Activated CD8-positive, alpha-beta T cell treated with anti-CD3 and anti-CD28 coated beads for 36 hours (primary cell): ENCODE measurements at regions of chr4 and their contacts with region 1.

Region 1: DNA sequence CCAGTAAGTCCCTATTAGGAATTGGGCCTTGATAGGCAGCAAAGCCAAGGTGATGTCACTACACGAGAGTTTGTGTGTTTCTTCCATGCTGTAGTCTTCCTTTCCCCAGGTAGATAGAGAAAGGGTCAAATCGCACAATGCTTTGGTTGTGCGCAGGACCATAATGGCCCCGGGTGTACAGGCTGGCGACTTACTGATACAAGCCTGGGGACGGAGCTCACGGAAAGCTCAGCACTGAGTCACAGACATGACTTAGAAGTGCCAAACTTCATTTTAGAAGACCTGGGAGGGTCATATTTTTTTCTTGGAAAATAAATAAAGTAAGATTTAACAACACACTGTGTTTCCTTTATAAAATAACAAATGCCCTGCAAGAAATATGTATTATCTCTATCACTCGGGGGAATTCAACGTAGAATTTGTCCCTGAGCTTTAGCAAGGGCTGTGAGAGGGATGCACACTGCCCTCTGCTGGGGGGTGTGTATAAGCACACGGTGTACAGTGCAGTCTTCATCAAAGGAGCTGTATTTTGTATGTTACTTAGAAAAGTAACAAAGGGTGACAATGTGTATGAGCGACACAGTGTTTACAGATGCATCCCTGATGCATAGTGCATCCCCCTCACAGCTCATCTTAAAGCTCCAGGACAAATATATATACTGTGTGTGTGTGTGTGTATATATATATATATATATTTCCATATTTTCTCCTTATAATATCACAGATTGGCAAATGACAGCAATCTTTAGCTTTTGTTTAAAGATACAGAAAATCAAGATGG is 254.5 kb upstream of the VEGFC start:
- DNase-seq: peak; percentile 51
- ATAC-seq: peak; percentile 96
- H3K4me3 Mint-ChIP-seq: no peak overlapping the region
- H3K27ac Mint-ChIP-seq: no peak overlapping the region
- H3K4me1 Mint-ChIP-seq: no peaks in the 10 kb centered on the region
- H3K27me3 Mint-ChIP-seq: peaks cover 6% of the 10 kb centered on the region
- CTCF ChIP-seq: peak; percentile 78

Region 2: GRCh38 chr4:176377780-176378179 is 669.5 kb before region 1 on chr4:
- CTCF ChIA-PET with region 1: interaction called, 33 read pairs
- POLR2A ChIA-PET with region 1: no interaction called
- intact Hi-C with region 1: loop called (anchors 5 kb)
- DNase-seq: no peak
- ATAC-seq: peak; percentile 47
- H3K4me3 Mint-ChIP-seq: no peak overlapping the region
- H3K27ac Mint-ChIP-seq: no peak overlapping the region
- H3K4me1 Mint-ChIP-seq: no peaks in the 10 kb centered on the region
- H3K27me3 Mint-ChIP-seq: peaks cover 8% of the 10 kb centered on the region
- CTCF ChIP-seq: peak; percentile 35

Region 3: DNA sequence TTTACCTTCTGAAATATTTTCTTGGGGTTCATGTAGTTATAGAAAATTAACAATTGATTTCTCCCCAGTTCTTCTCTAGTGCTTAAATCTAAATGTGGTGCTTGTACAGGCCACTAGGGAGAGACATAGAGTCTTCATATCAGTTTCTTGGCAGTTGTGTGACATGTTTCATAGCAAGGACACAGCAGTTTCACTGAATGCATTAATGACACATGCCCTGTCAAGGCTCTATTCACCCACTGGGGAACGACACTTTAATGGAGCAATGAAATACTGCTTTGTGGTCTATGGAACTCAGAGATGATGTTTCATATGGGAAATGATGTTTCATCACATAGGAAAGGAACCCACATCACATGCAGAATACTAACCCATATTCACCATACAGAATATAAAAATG is 257.3 kb before region 1 on chr4:
- CTCF ChIA-PET with region 1: no interaction called
- POLR2A ChIA-PET with region 1: no interaction called
- intact Hi-C with region 1: loop called (anchors 5 kb)
- DNase-seq: no peak
- ATAC-seq: peak; percentile 65
- H3K4me3 Mint-ChIP-seq: no peak overlapping the region
- H3K27ac Mint-ChIP-seq: no peak overlapping the region
- H3K4me1 Mint-ChIP-seq: peaks cover 6% of the 10 kb centered on the region
- H3K27me3 Mint-ChIP-seq: peaks cover 41% of the 10 kb centered on the region
- CTCF ChIP-seq: peak; percentile 52

Region 4: GRCh38 chr4:176883681-176884418 is 163.4 kb before region 1 on chr4:
- CTCF ChIA-PET with region 1: no interaction called
- POLR2A ChIA-PET with region 1: no interaction called
- intact Hi-C with region 1: no loop called
- DNase-seq: no peak
- ATAC-seq: no peak
- H3K4me3 Mint-ChIP-seq: no peak overlapping the region
- H3K27ac Mint-ChIP-seq: no peak overlapping the region
- H3K4me1 Mint-ChIP-seq: no peaks in the 10 kb centered on the region
- H3K27me3 Mint-ChIP-seq: no peaks in the 10 kb centered on the region
- CTCF ChIP-seq: no peak

Region 5: GRCh38 chr4:177033135-177033534 is 14.1 kb before region 1 on chr4:
- CTCF ChIA-PET with region 1: interaction called, 10 read pairs
- POLR2A ChIA-PET with region 1: no interaction called
- intact Hi-C with region 1: no loop called
- DNase-seq: no peak
- ATAC-seq: no peak
- H3K4me3 Mint-ChIP-seq: no peak overlapping the region
- H3K27ac Mint-ChIP-seq: no peak overlapping the region
- H3K4me1 Mint-ChIP-seq: no peaks in the 10 kb centered on the region
- H3K27me3 Mint-ChIP-seq: no peaks in the 10 kb centered on the region
- CTCF ChIP-seq: no peak

Region 6: DNA sequence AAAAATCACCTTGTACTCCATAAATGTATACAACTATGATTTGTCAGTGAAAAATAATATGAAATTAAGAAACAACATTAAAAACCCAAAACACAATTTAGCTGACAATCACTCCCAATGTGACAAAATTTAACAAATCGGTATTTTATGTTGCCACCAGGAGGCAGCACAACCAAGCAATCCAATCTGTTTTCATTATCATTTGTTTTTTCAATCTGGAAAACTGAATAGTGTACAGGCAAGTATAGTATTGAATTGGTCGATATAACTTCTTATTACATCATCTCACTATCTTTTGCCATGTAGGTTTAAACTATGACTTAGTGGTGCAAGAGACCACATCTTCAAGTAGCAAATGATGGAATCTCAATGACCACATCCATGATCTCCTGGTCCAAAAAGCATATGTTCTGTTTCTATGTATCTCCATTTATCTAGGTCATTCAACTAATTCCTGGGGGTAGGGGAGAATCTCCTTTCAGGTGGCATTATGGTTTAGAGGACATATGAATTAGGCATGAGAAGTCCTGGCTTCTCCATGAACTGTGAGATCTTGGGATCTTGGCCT is 507.8 kb after region 1 on chr4:
- CTCF ChIA-PET with region 1: no interaction called
- POLR2A ChIA-PET with region 1: no interaction called
- intact Hi-C with region 1: no loop called
- DNase-seq: peak; percentile 50
- ATAC-seq: no peak
- H3K4me3 Mint-ChIP-seq: no peak overlapping the region
- H3K27ac Mint-ChIP-seq: no peak overlapping the region
- H3K4me1 Mint-ChIP-seq: no peaks in the 10 kb centered on the region
- H3K27me3 Mint-ChIP-seq: no peaks in the 10 kb centered on the region
- CTCF ChIP-seq: peak; percentile 77